WTC11 (cell line): ENCODE measurements at regions of chr11 and their contacts with region 1.

Region 1: DNA sequence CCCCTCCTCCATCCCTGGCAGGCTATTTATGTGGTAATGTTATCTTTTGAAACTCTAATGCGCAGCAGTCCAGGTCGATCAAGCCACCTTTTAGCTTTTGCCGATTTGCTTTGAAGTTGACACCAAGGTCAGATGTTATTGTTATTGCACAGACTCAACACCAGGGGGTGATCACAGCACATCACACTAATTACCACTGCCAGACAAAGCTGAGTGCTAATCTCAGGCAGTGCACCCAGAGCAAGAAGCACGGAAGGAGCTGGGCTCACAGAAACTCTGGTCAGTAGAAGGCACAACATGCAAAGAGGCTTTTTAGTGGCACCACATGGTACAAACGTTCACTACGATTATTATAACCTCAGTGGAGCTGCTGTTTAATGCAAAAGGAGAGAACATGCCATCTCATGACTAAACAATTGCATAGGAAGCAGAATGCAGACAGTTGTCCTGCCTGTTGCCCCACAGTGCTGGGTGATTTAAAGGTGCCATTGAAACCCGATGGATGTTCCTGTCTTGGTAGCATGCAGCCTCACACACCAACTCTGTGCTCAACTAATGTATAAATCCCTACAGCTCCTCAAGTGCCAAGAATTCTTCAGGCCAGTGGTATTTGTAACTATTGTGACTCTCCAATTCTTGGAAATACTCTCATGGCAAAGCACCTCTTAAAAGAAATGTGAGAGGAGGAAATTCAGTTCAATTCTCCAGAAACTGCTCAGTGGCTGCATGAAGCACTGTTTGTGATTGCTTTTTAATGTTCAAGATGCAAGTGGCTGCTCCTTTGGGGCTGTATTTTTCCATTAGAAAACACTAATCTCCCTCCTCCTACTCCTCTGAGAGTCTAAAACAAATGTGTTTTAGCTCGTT is 353.9 kb upstream of the DDI1 start:
- DNase-seq: peak; percentile 66
- ATAC-seq: peak; percentile 96
- H3K4me3 Mint-ChIP-seq: peak overlapping the region; percentile 16
- H3K27ac Mint-ChIP-seq: no peak overlapping the region
- H3K4me1 Mint-ChIP-seq: peaks cover 20% of the 10 kb centered on the region
- H3K27me3 Mint-ChIP-seq: no peaks in the 10 kb centered on the region
- CTCF ChIP-seq: peak; percentile 82

Region 2: GRCh38 chr11:103699216-103699615 is 16.7 kb after region 1 on chr11:
- CTCF ChIA-PET with region 1: interaction called, 12 read pairs
- POLR2A ChIA-PET with region 1: no interaction called
- DNase-seq: no peak
- ATAC-seq: no peak
- H3K4me3 Mint-ChIP-seq: no peak overlapping the region
- H3K27ac Mint-ChIP-seq: no peak overlapping the region
- H3K4me1 Mint-ChIP-seq: peaks cover 6% of the 10 kb centered on the region; the same call in 1 of the 2 replicates
- H3K27me3 Mint-ChIP-seq: no peaks in the 10 kb centered on the region
- CTCF ChIP-seq: no peak

Region 3: GRCh38 chr11:103714246-103714645 is 31.7 kb after region 1 on chr11:
- CTCF ChIA-PET with region 1: no interaction called
- POLR2A ChIA-PET with region 1: no interaction called
- DNase-seq: no peak
- ATAC-seq: no peak
- H3K4me3 Mint-ChIP-seq: no peak overlapping the region
- H3K27ac Mint-ChIP-seq: no peak overlapping the region
- H3K4me1 Mint-ChIP-seq: no peaks in the 10 kb centered on the region
- H3K27me3 Mint-ChIP-seq: no peaks in the 10 kb centered on the region
- CTCF ChIP-seq: no peak

Region 4: GRCh38 chr11:103862094-103862801 is 179.7 kb after region 1 on chr11:
- CTCF ChIA-PET with region 1: interaction called, 13 read pairs
- POLR2A ChIA-PET with region 1: no interaction called
- DNase-seq: no peak
- ATAC-seq: peak; percentile 55
- H3K4me3 Mint-ChIP-seq: no peak overlapping the region
- H3K27ac Mint-ChIP-seq: no peak overlapping the region
- H3K4me1 Mint-ChIP-seq: peaks cover 14% of the 10 kb centered on the region
- H3K27me3 Mint-ChIP-seq: no peaks in the 10 kb centered on the region
- CTCF ChIP-seq: no peak

Region 5: DNA sequence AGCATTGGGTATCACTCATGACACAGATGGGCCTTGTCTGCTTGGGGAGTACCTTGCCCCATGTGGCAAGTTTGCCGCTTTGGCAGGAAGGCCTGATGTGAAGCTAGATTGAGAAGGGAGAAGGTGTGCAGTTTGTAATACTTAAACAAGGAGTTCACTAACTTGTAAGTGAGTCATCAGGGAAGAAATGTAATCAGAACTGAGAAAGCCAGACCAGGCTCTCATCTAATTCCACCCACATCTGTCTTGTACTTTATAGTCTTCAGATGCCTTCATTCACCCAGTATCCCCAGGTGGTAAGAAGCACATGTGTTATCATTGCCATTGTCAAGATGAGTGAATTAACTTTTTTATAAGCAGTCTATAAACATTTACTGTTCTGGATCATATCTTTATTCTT is 237.9 kb after region 1 on chr11:
- CTCF ChIA-PET with region 1: interaction called, 18 read pairs
- POLR2A ChIA-PET with region 1: no interaction called
- DNase-seq: no peak
- ATAC-seq: no peak
- H3K4me3 Mint-ChIP-seq: no peak overlapping the region
- H3K27ac Mint-ChIP-seq: no peak overlapping the region; the same call in 1 of the 2 replicates
- H3K4me1 Mint-ChIP-seq: peaks cover 10% of the 10 kb centered on the region
- H3K27me3 Mint-ChIP-seq: no peaks in the 10 kb centered on the region
- CTCF ChIP-seq: no peak

Region 6: GRCh38 chr11:104164028-104164520 is 481.5 kb after region 1 on chr11 and contains the start of gene PDGFD:
- CTCF ChIA-PET with region 1: interaction called, 41 read pairs
- POLR2A ChIA-PET with region 1: no interaction called
- DNase-seq: peak; percentile 89
- ATAC-seq: peak; percentile 94
- H3K4me3 Mint-ChIP-seq: peak within 1 kb of the TSS; percentile 91
- H3K27ac Mint-ChIP-seq: peak within 1 kb of the TSS; percentile 84
- H3K4me1 Mint-ChIP-seq: peaks cover 19% of the 10 kb centered on the region
- H3K27me3 Mint-ChIP-seq: peaks cover 3% of the 10 kb centered on the region; the same call in 1 of the 2 replicates
- CTCF ChIP-seq: no peak; the same call in 1 of the 2 replicates
- total RNA-seq, gene PDGFD: 2.6 to 3.1 TPM (median 2.9 TPM) in 3 replicates

Region 7: DNA sequence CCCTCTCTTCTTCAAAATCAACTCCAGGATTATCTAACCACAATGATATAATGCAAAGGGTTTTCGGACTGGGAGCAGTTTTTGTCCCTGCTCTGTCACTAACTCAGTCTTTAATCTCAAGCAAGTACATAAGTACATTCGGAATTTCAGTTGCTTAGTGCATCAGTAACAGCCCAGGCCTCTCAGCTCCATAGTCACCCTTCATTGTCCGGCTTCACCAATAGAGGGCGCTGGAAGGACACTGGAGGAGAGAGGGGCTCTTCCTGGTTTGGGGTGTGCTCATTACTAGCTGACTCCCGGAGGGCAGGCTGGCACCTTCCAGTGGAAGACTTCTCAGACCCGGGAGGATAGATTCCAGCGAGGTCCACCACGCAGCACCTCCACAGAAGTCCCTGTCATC is 571.8 kb after region 1 on chr11:
- CTCF ChIA-PET with region 1: interaction called, 13 read pairs
- POLR2A ChIA-PET with region 1: no interaction called
- DNase-seq: peak; percentile 85
- ATAC-seq: peak; percentile 100
- H3K4me3 Mint-ChIP-seq: no peak overlapping the region
- H3K27ac Mint-ChIP-seq: no peak overlapping the region
- H3K4me1 Mint-ChIP-seq: 0 out of 2 replicates have a peak, but pooled peaks cover 2% of the 10 kb centered on the region
- H3K27me3 Mint-ChIP-seq: no peaks in the 10 kb centered on the region
- CTCF ChIP-seq: peak; percentile 85